ENCODE measurements at regions of chr15 and their contacts with region 1.

Region 1: DNA sequence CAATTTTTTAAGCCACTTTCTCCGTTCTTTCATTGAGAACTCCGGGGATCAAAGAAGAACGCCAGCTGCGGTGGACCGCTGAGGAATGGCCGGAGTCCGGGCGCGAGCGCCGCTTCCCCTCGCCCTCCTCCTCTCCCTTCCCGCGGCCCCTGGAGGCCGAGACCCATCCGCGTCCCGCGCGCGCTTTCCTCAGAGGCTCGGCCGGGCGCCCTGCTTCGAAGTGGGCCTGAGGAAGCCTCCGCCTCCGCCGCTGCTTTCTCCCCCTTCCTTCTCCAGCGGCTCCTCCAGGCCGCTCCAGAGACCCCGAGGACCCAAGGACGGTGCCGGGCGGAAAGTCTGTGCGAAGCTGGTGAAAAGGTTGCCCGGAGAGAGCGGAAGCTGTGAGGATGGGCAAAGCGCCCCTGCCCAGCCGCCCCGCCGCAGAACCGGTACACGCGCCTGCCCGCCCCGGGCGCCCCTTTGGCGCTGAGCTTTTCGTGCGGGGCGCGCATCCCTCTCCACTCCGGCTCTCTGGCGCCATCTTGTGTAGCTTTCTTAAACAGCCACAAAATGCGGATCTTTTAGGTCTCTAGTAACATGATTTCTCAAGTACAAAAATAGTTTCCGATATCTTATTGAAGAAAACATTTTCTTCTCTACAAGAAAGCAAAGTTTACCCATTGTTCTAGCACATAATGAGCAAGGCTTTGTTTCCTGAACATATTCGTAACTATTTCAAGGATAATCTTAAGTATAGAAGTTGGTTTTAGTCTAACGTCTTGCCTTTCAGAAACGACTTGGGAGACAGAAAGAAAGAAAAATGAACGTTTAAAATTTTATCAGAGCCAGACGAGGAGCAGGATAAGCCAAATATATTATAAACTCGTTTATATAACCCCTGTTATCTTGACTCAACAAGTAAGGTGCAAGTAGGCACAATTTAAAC is 59.2 kb upstream of the FAM174B start:
- DNase-seq: peak; percentile 81
- H3K4me3 Mint-ChIP-seq: peak overlapping the region; percentile 73
- H3K27ac Mint-ChIP-seq: no peak overlapping the region
- H3K4me1 Mint-ChIP-seq: peaks cover 8% of the 10 kb centered on the region
- H3K27me3 Mint-ChIP-seq: peaks cover 36% of the 10 kb centered on the region
- CTCF ChIP-seq: peak; percentile 87

Region 2: GRCh38 chr15:92097474-92098178 is 617.1 kb before region 1 on chr15:
- CTCF ChIA-PET with region 1: no interaction called
- intact Hi-C with region 1: loop called (anchors 5 kb)
- DNase-seq: peak; percentile 64
- H3K4me3 Mint-ChIP-seq: no peak overlapping the region
- H3K27ac Mint-ChIP-seq: no peak overlapping the region
- H3K4me1 Mint-ChIP-seq: peaks cover 7% of the 10 kb centered on the region
- H3K27me3 Mint-ChIP-seq: no peaks in the 10 kb centered on the region
- CTCF ChIP-seq: peak; percentile 85

Region 3: DNA sequence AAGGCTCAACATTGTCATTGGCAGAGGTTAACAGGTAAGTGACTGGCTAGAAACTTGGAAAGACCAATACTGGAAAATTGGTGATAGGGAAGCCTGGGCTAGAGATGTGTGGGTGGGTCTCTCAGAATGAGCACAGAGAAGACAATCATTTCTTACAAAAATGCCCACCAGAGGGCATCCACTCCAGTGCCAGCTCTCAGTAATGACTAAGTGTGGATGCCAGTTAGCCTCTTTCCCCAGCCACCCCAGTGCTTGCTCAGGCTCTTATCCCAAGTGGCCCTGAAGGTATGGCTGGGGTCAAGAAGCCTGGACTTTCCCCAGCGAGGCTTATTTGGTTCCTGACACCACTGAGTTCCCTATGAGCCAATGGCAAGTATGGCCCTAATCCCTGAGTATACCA is 437.0 kb before region 1 on chr15:
- CTCF ChIA-PET with region 1: interaction called, 7 read pairs
- intact Hi-C with region 1: loop called (anchors 2 kb)
- DNase-seq: peak; percentile 38
- H3K4me3 Mint-ChIP-seq: no peak overlapping the region
- H3K27ac Mint-ChIP-seq: no peak overlapping the region
- H3K4me1 Mint-ChIP-seq: no peaks in the 10 kb centered on the region
- H3K27me3 Mint-ChIP-seq: peaks cover 40% of the 10 kb centered on the region
- CTCF ChIP-seq: peak; percentile 40

Region 4: DNA sequence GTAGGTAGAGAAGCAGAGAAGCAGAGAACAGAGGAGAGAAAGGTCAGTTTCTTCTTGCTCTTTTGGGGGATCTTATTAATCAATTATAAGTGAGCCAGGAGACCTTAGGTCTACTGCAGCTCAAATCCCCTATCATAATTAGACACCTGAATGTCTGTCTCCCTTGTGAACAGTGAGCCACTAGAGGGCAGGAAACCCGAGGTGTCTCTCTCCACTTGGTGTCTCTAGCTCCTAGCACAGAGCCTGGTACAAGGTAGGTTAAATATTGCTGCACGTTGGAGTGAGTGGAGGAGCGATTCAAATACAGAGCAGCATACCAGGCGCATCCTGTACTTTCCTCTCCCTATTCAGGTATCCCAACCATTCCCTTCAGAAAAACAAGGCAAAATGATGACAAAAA is 323.1 kb before region 1 on chr15:
- CTCF ChIA-PET with region 1: interaction called, 6 read pairs
- intact Hi-C with region 1: loop called (anchors 2 kb)
- DNase-seq: peak; percentile 35
- H3K4me3 Mint-ChIP-seq: no peak overlapping the region
- H3K27ac Mint-ChIP-seq: no peak overlapping the region
- H3K4me1 Mint-ChIP-seq: no peaks in the 10 kb centered on the region
- H3K27me3 Mint-ChIP-seq: peaks cover 99% of the 10 kb centered on the region
- CTCF ChIP-seq: no peak

Region 5: GRCh38 chr15:92521624-92522008 is 193.1 kb before region 1 on chr15:
- CTCF ChIA-PET with region 1: interaction called, 60 read pairs
- intact Hi-C with region 1: loop called (anchors 1 kb)
- DNase-seq: peak; percentile 82
- H3K4me3 Mint-ChIP-seq: no peak overlapping the region
- H3K27ac Mint-ChIP-seq: no peak overlapping the region
- H3K4me1 Mint-ChIP-seq: peaks cover 8% of the 10 kb centered on the region
- H3K27me3 Mint-ChIP-seq: peaks cover 30% of the 10 kb centered on the region
- CTCF ChIP-seq: peak; percentile 62

Region 6: DNA sequence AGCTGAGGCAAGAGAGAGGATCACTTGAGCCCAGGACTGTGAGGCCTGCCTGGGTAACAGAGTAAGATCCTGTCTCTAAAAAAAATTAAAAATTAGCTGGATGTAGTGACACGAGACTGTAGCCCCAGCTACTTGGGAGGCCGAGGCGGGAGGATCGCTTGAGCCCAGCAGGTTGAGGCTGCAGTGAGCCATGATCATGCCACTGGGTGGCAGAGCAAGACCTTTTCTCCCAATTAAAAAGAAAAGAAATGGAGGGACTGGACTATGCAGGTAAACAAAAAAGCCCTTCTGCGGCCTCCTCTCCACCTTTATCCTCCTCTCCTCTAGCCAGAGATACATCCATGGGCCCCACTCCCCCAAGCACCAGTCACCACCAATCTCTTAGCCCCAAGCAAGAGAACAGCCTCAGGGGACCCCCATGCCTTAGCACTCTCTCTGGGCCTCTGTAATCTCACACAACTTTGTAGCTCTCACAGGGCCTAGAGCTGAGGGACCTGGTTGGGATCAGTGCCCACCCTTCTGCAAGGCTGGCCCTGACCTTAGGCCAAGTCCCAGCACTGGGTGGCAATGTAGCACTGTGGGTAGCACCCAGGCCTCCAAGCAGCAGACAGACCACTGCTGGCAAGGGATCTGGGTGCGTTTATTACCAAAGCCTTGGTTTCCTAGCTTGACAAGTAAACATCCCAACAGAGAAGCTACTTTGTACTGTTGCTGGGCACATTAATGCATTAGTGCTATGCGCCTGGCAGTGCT is 102.6 kb before region 1 on chr15:
- CTCF ChIA-PET with region 1: interaction called, 4 read pairs
- intact Hi-C with region 1: loop called (anchors 2 kb)
- DNase-seq: no peak
- H3K4me3 Mint-ChIP-seq: no peak overlapping the region
- H3K27ac Mint-ChIP-seq: no peak overlapping the region
- H3K4me1 Mint-ChIP-seq: peaks cover 1% of the 10 kb centered on the region
- H3K27me3 Mint-ChIP-seq: peaks cover 18% of the 10 kb centered on the region
- CTCF ChIP-seq: no peak

Region 7: GRCh38 chr15:92653836-92654539 is 60.8 kb before region 1 on chr15:
- CTCF ChIA-PET with region 1: no interaction called
- intact Hi-C with region 1: no loop called
- DNase-seq: no peak
- H3K4me3 Mint-ChIP-seq: peak overlapping the region; percentile 77
- H3K27ac Mint-ChIP-seq: no peak overlapping the region
- H3K4me1 Mint-ChIP-seq: no peaks in the 10 kb centered on the region
- H3K27me3 Mint-ChIP-seq: peaks cover 42% of the 10 kb centered on the region
- CTCF ChIP-seq: no peak

Region 8: GRCh38 chr15:92693691-92694331 is 20.9 kb before region 1 on chr15:
- CTCF ChIA-PET with region 1: no interaction called
- intact Hi-C with region 1: loop called (anchors 1 kb)
- DNase-seq: peak; percentile 62
- H3K4me3 Mint-ChIP-seq: no peak overlapping the region
- H3K27ac Mint-ChIP-seq: no peak overlapping the region
- H3K4me1 Mint-ChIP-seq: no peaks in the 10 kb centered on the region
- H3K27me3 Mint-ChIP-seq: peaks cover 66% of the 10 kb centered on the region
- CTCF ChIP-seq: peak; percentile 50

Measured in Calu3 (cell line).